Activated CD4-positive, alpha-beta memory T cell treated with anti-CD3 and anti-CD28 coated beads, Interleukin-2, amount 10 ng/mL, durations not matched to agents 7 days and 5 days (primary cell): ENCODE measurements at regions of chrX and their contacts with region 1.

Region 1: DNA sequence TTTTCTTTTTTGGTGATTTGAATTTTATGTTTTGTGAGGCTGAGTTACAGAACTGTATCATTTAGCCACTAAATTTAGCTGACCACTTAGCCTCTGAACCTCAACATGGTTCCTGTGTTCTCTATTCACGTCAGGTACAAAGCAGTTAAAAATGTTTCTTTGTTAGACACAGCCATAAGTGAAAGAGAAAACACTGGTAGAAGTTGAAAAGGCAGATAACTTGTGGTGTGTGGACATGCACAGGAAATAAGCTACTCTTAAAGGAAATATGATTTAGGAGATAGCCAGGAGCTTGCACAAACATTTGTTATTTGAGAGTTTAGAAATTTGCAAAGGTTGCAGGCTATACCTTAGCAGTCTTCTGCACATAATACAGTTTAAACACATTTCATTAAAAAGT is 171.0 kb upstream of the RPS6KA3 start:
- DNase-seq: no peak
- H3K4me3 Mint-ChIP-seq: peak overlapping the region; percentile 32
- H3K27ac Mint-ChIP-seq: peak overlapping the region; percentile 93
- H3K4me1 Mint-ChIP-seq: peaks cover 40% of the 10 kb centered on the region
- H3K27me3 Mint-ChIP-seq: no peaks in the 10 kb centered on the region

Region 2: GRCh38 chrX:20252381-20253231 is 185.1 kb before region 1 on chrX:
- CTCF ChIA-PET with region 1: interaction called, 32 read pairs
- POLR2A ChIA-PET with region 1: interaction called, 4 read pairs
- DNase-seq: peak; percentile 71
- H3K4me3 Mint-ChIP-seq: no peak overlapping the region
- H3K27ac Mint-ChIP-seq: peak overlapping the region; percentile 90
- H3K4me1 Mint-ChIP-seq: peaks cover 51% of the 10 kb centered on the region
- H3K27me3 Mint-ChIP-seq: no peaks in the 10 kb centered on the region

Region 3: DNA sequence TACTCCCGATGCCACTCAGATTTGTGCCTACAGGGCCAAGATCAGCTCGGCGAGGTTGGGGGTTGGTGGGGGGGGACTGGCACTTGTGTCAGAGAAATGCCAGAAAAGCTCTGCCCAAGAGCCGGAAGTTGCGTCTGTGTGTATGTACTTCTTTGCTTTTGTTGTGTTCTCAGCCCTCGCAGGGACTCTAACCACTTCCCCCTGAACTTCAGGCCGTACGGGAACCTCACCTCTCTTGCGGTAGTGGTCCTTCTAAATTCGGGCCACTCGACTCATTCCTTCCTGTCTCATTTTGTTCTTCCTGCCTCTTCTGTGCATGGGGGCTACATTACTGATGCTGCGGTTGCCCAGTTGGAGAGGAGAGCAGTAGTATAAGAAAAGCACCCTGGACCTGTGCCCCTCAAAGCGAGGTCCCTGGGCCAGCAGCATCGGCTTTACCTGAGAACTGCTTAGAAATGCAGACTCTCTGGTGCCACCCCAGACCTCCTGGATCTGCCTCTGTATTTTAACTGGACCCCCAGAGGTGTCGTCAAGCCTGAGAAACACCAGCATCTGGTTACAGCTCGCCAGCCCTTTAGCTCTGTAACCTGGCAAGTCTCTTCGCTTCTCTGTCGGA is 24.7 kb before region 1 on chrX:
- CTCF ChIA-PET with region 1: interaction called, 3 read pairs
- POLR2A ChIA-PET with region 1: interaction called, 21 read pairs
- DNase-seq: peak; percentile 62
- H3K4me3 Mint-ChIP-seq: peak overlapping the region; percentile 14
- H3K27ac Mint-ChIP-seq: peak overlapping the region; percentile 87
- H3K4me1 Mint-ChIP-seq: peaks cover 28% of the 10 kb centered on the region
- H3K27me3 Mint-ChIP-seq: no peaks in the 10 kb centered on the region

Region 4: DNA sequence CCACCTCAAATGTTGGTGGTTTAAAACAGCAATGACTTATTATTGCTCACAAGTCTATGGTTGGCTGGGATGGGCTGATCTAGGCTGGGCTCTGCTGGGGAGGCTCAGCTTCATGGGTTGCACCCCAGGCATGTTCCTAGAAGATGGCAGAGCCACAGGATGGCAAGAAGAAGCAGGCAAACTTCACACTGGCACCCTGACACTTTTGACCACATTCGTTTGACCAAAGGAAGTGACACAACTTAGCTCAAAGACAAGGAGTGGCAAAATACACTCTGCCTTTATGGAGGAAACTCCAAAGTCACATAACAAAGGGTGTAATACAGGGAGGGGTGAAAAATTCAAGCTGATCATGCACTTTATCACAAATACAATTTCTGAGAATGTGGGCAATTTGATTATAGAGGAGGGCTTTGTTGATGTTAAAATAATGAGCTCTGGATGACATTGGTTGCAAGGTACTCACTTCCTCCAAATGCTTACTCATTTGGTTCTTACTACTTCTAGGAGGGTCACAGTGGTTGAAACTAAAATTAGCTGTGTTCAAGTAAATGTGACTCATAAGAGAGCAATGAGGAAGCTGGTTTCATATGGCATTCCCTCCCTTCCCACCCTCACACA is 78.3 kb after region 1 on chrX:
- CTCF ChIA-PET with region 1: interaction called, 3 read pairs
- POLR2A ChIA-PET with region 1: interaction called, 12 read pairs
- DNase-seq: peak; percentile 51
- H3K4me3 Mint-ChIP-seq: peak overlapping the region; percentile 32
- H3K27ac Mint-ChIP-seq: peak overlapping the region; percentile 98
- H3K4me1 Mint-ChIP-seq: peaks cover 46% of the 10 kb centered on the region
- H3K27me3 Mint-ChIP-seq: peaks cover 16% of the 10 kb centered on the region

Region 5: GRCh38 chrX:20542072-20542471 is 104.4 kb after region 1 on chrX:
- CTCF ChIA-PET with region 1: no interaction called
- POLR2A ChIA-PET with region 1: no interaction called
- DNase-seq: no peak
- H3K4me3 Mint-ChIP-seq: no peak overlapping the region
- H3K27ac Mint-ChIP-seq: no peak overlapping the region
- H3K4me1 Mint-ChIP-seq: no peaks in the 10 kb centered on the region
- H3K27me3 Mint-ChIP-seq: no peaks in the 10 kb centered on the region